ENCODE measurements at regions of chr12 and their contacts with region 1.

Region 1: GRCh38 chr12:11092128-11092527 is at the start of gene TAS2R43:
- DNase-seq: no peak
- ATAC-seq: no peak
- total RNA-seq, gene TAS2R43: 1.7 TPM

Region 2: DNA sequence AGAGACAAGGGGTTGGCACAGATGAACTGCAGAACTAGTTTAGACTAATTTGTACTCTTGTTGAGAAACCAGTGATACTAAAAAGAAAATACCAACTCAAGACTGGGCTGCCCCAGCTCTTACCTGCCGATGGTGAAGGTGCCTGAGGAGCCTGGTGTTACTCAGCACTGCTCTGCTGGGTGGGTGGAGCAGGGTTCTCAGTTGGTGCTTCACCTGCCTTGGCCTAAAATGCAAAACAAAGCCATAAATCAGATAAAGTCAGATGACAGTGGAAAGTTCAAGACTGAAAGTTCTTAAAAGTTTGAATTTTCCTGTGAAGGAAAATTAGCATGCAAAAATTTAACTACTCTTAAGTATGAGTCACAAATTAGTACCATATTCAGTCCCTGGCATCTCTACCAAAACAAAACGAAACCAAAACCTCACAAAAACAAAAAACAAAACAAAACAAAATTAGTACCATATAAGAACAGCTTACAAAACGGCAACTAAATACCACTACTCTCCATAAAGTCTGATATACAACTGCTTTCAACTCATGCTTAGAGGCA is 390.9 kb before region 1 on chr12:
- intact Hi-C with region 1: no loop called
- DNase-seq: no peak
- ATAC-seq: no peak

Region 3: DNA sequence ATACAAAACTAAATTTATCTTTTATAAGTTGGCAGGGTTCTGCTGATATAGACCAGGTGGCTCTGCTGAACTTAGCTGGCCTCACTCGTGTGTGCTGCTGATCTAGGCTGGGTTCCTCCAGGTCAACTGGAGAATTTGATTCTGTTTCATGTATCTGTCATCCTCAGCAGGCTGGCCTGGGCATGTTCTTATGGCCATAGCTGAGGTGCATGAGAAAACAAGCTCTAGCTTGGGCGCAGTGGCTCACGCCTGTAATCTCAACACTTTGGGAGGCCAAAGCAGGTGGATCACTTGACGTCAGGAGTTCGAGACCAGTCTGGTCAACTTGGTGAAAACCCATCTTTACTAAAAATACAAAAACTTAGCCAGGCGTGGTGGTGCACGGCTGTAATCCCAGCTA is 954.3 kb after region 1 on chr12:
- intact Hi-C with region 1: loop called (anchors 5 kb)
- DNase-seq: no peak
- ATAC-seq: no peak

Measured in sciatic nerve (tissue), 2 donors.